CD8-positive, alpha-beta T cell (primary cell): ENCODE measurements at regions of chr2 and their contacts with region 1.

Region 1: DNA sequence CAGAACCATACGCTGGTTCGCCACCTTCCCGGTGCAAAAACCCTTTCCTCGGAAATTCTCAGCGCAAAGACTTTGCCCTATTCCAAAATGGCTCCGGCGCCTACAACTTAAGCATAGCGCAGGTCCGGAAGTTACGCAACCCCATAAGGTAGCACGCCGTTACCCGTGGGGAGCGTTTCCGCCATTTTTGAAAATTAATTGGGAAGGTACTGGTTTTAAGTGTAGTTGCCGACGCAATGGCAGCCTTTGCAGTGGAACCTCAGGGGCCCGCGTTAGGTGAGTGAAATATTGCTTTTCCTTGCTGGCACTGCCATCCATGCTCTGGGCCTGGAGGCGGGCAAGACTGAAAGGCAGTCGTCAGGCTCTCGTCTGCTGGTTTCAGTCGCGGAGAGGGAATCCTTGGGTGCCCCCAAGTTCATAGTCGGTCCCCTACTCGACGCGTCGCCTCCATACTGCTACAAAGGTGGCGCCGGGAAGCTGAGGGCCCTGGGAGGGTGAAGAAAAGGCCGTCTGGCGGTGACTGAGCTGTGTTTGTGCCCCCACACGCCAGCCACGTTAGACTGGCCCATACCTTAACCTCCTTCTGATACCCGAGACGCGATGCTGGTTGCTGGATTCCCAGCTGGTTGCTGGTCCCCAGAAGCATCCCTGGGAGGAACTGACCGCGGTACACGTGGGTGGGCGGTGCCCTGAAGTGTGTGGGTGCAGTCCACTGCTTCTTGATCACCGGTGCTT is at the start of gene NUP35:
- DNase-seq: peak; percentile 70 to 91 (median 87)
- ATAC-seq: peak; percentile 93
- H3K4me3 ChIP-seq: peak within 1 kb of the TSS; percentile 88 to 92
- H3K4me3 Mint-ChIP-seq: peak within 1 kb of the TSS; percentile 97
- H3K27ac ChIP-seq: peak within 1 kb of the TSS; percentile 74 to 96
- H3K27ac Mint-ChIP-seq: peak within 1 kb of the TSS; percentile 99
- H3K4me1 ChIP-seq: peaks cover 14% of the 10 kb centered on the region
- H3K4me1 Mint-ChIP-seq: peaks cover 45% of the 10 kb centered on the region
- H3K27me3 ChIP-seq: no peaks in the 10 kb centered on the region
- H3K27me3 Mint-ChIP-seq: peaks cover 11% of the 10 kb centered on the region
- CTCF ChIP-seq: no peak
- total RNA-seq, gene NUP35: 14.5 to 15.9 TPM

Region 2: GRCh38 chr2:181891966-181892798 is 1232.2 kb before region 1 on chr2:
- CTCF ChIA-PET with region 1: no interaction called
- POLR2A ChIA-PET with region 1: no interaction called
- intact Hi-C with region 1: loop called (anchors 2 to 10 kb)
- DNase-seq: peak; percentile 26 to 77 (median 61)
- ATAC-seq: peak; percentile 63
- H3K4me3 ChIP-seq: peak overlapping the region; percentile 80 to 85
- H3K4me3 Mint-ChIP-seq: peak overlapping the region; percentile 92
- H3K27ac ChIP-seq: peak overlapping the region; percentile 53 to 55
- H3K27ac Mint-ChIP-seq: peak overlapping the region; percentile 86
- H3K4me1 ChIP-seq: peaks cover 19% of the 10 kb centered on the region
- H3K4me1 Mint-ChIP-seq: peaks cover 39% of the 10 kb centered on the region
- H3K27me3 ChIP-seq: peaks cover 0 to 3% of the 10 kb centered on the region in 2 experiments
- H3K27me3 Mint-ChIP-seq: peaks cover 12% of the 10 kb centered on the region
- CTCF ChIP-seq: peak; percentile 14

Region 3: DNA sequence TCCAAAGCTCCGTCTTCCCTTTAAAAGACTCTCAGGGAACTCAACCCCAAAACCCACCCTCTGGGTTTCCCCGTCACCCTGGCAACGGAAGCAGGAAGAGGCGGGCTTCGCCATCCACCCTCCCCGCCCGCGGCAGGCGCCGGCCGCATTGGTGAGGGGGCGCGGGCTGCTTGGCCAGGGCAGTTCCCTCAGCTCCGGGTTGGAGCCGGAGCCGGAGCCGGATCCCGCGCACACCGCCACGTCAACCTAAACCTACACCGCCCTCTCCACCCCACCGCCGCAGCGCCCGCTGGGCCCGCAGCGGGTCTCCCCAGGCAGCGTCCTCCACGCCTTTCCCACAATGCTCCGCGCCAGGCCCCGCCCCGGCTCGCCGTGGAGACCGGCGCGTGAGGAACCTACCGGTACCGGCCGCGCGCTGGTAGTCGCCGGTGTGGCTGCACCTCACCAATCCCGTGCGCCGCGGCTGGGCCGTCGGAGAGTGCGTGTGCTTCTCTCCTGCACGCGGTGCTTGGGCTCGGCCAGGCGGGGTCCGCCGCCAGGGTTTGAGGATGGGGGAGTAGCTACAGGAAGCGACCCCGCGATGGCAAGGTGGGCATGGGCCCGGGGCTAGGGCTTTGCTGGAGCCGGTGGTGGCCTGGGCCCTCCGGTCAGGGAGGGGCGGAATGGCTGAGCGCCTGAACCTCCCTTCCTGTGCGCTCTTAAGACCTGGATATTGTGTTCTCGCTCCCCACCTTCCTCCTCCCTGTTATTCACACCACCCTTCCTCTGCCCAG is 408.3 kb before region 1 on chr2 and contains the start of gene DNAJC10:
- CTCF ChIA-PET with region 1: no interaction called
- POLR2A ChIA-PET with region 1: no interaction called
- intact Hi-C with region 1: loop called (anchors 1 to 2 kb)
- DNase-seq: peak; percentile 66 to 93 (median 85)
- ATAC-seq: peak; percentile 81
- H3K4me3 ChIP-seq: peak within 1 kb of the TSS; percentile 70 to 85
- H3K4me3 Mint-ChIP-seq: no peak within 1 kb of the TSS
- H3K27ac ChIP-seq: peak within 1 kb of the TSS; percentile 59 to 65
- H3K27ac Mint-ChIP-seq: no peak within 1 kb of the TSS
- H3K4me1 ChIP-seq: peaks cover 21% of the 10 kb centered on the region
- H3K4me1 Mint-ChIP-seq: peaks cover 3% of the 10 kb centered on the region
- H3K27me3 ChIP-seq: no peaks in the 10 kb centered on the region
- H3K27me3 Mint-ChIP-seq: peaks cover 5% of the 10 kb centered on the region
- CTCF ChIP-seq: no peak
- total RNA-seq, gene DNAJC10: 27.5 to 27.9 TPM

Region 4: DNA sequence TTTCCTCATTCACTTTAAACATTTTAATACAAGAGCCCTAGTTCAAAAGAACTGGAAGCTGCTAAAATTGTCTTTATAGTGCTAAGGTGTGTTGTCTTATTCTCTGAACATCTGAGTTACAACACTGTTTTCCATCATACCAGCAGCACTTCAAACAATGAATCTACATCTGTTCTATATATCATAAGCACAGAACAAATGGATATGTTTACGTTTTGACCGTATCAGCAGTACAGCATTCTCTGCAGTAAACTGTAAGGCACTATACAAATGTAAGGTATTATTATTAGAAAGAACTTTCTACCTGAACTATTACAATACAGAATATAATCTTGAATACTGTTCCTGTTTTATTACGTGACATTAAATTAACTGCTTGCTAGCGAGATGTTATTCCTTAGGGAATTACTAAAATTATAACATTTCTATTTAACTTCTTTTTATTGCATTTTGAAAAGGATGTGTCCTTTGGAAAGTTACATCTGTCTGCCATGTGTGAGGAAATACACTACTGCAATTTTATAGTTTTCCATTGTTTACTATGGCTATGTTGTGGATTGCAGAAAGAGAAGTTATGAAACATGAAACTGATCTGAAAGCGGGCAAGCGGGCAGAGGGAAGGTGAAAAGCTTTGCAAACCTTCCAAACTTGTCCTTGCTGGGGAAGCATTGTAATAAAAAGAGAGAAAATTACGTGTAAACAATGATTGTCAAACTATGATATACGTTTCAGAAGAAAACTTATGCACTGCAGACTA is 99.9 kb before region 1 on chr2:
- CTCF ChIA-PET with region 1: no interaction called
- POLR2A ChIA-PET with region 1: no interaction called
- intact Hi-C with region 1: no loop called
- DNase-seq: no peak
- ATAC-seq: no peak
- H3K4me3 ChIP-seq: no peak overlapping the region
- H3K4me3 Mint-ChIP-seq: no peak overlapping the region
- H3K27ac ChIP-seq: no peak overlapping the region
- H3K27ac Mint-ChIP-seq: no peak overlapping the region
- H3K4me1 ChIP-seq: no peaks in the 10 kb centered on the region
- H3K4me1 Mint-ChIP-seq: no peaks in the 10 kb centered on the region
- H3K27me3 ChIP-seq: peaks cover 0 to under 1% of the 10 kb centered on the region in 2 experiments
- H3K27me3 Mint-ChIP-seq: peaks cover 37% of the 10 kb centered on the region
- CTCF ChIP-seq: no peak

Region 5: GRCh38 chr2:183038341-183039300 is 85.8 kb before region 1 on chr2 and contains the start of gene NCKAP1:
- CTCF ChIA-PET with region 1: no interaction called
- POLR2A ChIA-PET with region 1: no interaction called
- intact Hi-C with region 1: loop called (anchors 1 to 2 kb)
- DNase-seq: peak; percentile 63 to 89 (median 78)
- ATAC-seq: peak; percentile 85
- H3K4me3 ChIP-seq: peak within 1 kb of the TSS; percentile 52 to 54
- H3K4me3 Mint-ChIP-seq: peak within 1 kb of the TSS; percentile 80
- H3K27ac ChIP-seq: no peak within 1 kb of the TSS
- H3K27ac Mint-ChIP-seq: peak within 1 kb of the TSS; percentile 41
- H3K4me1 ChIP-seq: peaks cover 29% of the 10 kb centered on the region
- H3K4me1 Mint-ChIP-seq: peaks cover 30% of the 10 kb centered on the region
- H3K27me3 ChIP-seq: peaks cover 10 to 11% of the 10 kb centered on the region in 2 experiments
- H3K27me3 Mint-ChIP-seq: peaks cover 51% of the 10 kb centered on the region
- CTCF ChIP-seq: peak; percentile 74
- total RNA-seq, gene NCKAP1: 0.81 to 1.4 TPM

Region 6: DNA sequence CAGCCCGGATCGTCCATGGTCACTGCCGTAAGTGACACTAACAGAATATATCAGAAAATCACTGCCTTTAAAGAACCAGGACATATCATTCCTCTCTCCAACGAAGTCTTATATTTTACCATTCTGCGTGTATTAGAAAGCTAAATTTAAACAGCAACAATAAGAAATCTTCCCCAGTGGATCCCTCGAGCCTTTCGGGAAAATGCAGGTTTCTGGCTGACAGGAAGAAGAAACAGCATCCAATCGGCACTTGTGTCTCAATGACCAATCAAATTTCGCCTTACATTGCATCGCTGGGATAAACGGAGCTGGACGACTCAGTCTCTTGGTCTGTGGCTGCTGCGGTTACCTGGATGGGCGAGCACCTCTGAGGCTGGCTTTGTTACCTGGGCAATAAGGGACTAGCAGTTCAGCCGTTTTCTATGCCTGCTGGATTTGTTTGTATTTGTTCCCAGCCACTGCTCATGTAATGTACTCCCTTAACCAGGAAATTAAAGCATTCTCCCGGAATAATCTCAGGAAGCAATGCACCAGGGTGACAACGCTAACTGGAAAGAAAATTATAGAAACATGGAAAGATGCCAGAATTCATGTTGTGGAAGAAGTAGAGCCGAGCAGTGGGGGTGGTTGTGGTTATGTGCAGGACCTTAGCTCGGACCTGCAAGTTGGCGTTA is 45.8 kb before region 1 on chr2 and contains the start of gene DUSP19:
- CTCF ChIA-PET with region 1: no interaction called
- POLR2A ChIA-PET with region 1: interaction called, 3 read pairs
- intact Hi-C with region 1: loop called (anchors 1 kb)
- DNase-seq: peak; percentile 61 to 88 (median 73)
- ATAC-seq: peak; percentile 74
- H3K4me3 ChIP-seq: peak within 1 kb of the TSS; percentile 74 to 92
- H3K4me3 Mint-ChIP-seq: peak within 1 kb of the TSS; percentile 94
- H3K27ac ChIP-seq: peak within 1 kb of the TSS in 1 of 2 experiments; percentile 26
- H3K27ac Mint-ChIP-seq: peak within 1 kb of the TSS; percentile 66
- H3K4me1 ChIP-seq: peaks cover 7% of the 10 kb centered on the region
- H3K4me1 Mint-ChIP-seq: peaks cover 11% of the 10 kb centered on the region
- H3K27me3 ChIP-seq: no peaks in the 10 kb centered on the region
- H3K27me3 Mint-ChIP-seq: peaks cover 2% of the 10 kb centered on the region
- CTCF ChIP-seq: no peak
- total RNA-seq, gene DUSP19: 0.24 TPM in 1 of 2 experiments, not detected in the other